ENCODE measurements at regions of chr1 and their contacts with region 1.

Region 1: DNA sequence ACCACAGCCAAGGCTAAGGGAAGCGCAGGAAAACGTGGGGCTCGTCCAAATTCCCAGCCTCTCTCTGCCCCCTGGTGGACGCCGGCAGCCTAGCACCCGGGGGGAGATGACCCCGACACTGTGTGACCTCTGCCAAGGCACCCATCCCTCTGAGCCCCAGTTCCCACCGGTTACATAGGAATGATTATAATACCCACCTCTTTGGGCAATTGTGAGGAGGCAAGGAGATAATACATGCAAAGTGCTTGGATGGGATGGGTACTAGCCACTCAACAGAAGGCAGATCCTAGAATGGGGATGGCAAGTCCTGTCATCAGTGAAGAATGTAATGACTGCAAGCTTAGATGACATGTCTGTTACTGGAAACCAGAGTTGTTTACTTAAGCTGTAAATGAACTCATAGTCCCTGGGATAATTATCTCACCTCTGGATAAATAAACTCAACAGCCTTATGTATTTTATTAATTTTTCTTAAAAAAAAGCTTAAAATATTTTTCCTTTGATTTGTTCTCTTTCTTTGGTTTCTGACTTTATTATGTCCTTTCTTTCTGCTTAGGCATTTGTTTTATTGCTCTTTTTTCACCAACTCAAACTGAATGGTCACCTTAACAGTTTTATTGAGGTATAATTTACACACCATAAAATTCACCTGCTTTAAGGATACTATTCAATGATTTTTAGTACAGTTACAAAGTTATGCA is 11.3 kb upstream of the BMP8B start:
- DNase-seq: peak; percentile 35
- H3K4me3 ChIP-seq: no peak overlapping the region
- H3K27ac ChIP-seq: no peak overlapping the region
- H3K4me1 ChIP-seq: no peaks in the 10 kb centered on the region
- H3K27me3 ChIP-seq: peaks cover 0 to 3% of the 10 kb centered on the region in 2 experiments
- CTCF ChIP-seq: peak; percentile 75 to 85
- POLR2A ChIP-seq: no peak

Region 2: DNA sequence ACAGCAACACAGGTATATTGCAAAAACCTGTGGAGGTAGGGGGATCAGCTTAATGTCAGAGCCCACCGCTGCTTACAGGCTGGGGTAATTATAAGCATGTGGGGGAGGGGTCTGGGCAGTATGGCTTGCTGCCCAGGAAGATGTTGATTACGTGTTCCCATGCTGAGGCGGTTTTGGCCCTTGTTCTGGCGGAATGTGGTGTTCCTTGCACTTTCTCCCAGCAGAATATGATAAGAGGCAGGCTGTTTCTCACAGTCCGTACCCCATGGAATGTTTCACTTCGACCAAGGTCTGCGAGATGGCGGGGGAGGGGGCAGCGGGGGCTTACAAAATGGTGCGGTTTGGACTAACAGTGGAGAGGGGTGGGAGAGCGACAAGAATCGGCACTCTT is 98.9 kb before region 1 on chr1:
- CTCF ChIA-PET with region 1: interaction called, 9 read pairs
- POLR2A ChIA-PET with region 1: no interaction called
- dilution Hi-C with region 1: no loop called
- intact Hi-C with region 1: loop called (anchors 1 kb)
- DNase-seq: no peak
- H3K4me3 ChIP-seq: no peak overlapping the region
- H3K27ac ChIP-seq: no peak overlapping the region
- H3K4me1 ChIP-seq: no peaks in the 10 kb centered on the region
- H3K27me3 ChIP-seq: peaks cover 31 to 39% of the 10 kb centered on the region in 2 experiments
- CTCF ChIP-seq: no peak
- POLR2A ChIP-seq: no peak

Region 3: GRCh38 chr1:39894884-39895495 is 95.1 kb after region 1 on chr1:
- CTCF ChIA-PET with region 1: no interaction called
- POLR2A ChIA-PET with region 1: no interaction called
- dilution Hi-C with region 1: no loop called
- intact Hi-C with region 1: no loop called
- DNase-seq: no peak
- H3K4me3 ChIP-seq: no peak overlapping the region
- H3K27ac ChIP-seq: no peak overlapping the region
- H3K4me1 ChIP-seq: peaks cover 14% of the 10 kb centered on the region
- H3K27me3 ChIP-seq: peaks cover 13 to 27% of the 10 kb centered on the region in 2 experiments
- CTCF ChIP-seq: no peak
- POLR2A ChIP-seq: no peak

Measured in endothelial cell of umbilical vein (primary cell).